ENCODE measurements at regions of chr22 and their contacts with region 1.

Region 1: DNA sequence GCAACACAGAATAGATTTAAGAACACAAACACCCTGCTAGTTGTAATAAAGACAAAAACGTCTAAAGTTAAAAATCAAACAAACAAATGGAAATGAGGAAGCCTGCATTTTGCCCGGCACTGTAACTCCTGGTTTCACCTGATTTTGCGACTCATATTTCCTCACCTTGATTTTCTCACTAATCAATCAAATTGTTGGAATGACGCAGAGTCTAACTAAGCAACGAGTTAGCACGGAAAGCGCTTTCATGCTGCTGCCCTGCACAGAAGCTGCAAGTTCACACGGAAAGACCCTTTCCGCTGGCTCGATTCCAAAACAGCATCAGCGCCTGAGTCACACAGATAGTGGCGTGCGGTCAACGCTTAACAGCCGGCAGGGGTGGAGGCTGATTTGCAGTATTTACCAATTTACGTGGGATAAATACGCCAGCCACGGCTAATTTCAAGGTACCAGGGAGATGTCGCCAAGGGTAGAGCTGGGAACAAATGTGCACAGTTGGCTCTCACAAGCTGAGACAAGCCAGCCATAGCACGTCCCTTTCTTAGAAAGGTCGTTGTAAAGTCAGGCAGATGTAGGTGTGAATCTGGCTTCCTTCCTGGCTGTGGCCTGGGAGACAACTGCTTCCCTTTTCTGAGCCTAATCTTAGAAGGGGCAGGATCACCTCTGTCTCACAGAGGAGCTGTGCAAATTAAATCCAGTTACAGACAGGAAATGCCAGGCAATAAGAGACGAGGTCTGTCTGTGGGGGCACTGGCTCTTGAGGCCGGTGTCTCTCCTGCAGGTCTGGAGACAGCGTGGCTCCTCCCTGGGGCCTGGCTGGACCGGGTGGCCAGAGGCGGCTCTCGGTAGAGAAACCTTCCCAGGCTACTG is 76.9 kb upstream of the TTLL12 start:
- DNase-seq: peak; percentile 60 to 95 (median 79)
- H3K4me3 ChIP-seq: peak overlapping the region; percentile 44
- H3K4me3 Mint-ChIP-seq: peak overlapping the region; percentile 65 to 88 (median 84)
- H3K27ac ChIP-seq: peak overlapping the region; percentile 68
- H3K27ac Mint-ChIP-seq: peak overlapping the region; percentile 86 to 98 (median 96)
- H3K4me1 ChIP-seq: peaks cover 26% of the 10 kb centered on the region
- H3K4me1 Mint-ChIP-seq: peaks cover 26 to 33% (median 32%) of the 10 kb centered on the region in 3 donors
- H3K27me3 ChIP-seq: no peaks in the 10 kb centered on the region
- H3K27me3 Mint-ChIP-seq: no peaks in the 10 kb centered on the region

Region 2: DNA sequence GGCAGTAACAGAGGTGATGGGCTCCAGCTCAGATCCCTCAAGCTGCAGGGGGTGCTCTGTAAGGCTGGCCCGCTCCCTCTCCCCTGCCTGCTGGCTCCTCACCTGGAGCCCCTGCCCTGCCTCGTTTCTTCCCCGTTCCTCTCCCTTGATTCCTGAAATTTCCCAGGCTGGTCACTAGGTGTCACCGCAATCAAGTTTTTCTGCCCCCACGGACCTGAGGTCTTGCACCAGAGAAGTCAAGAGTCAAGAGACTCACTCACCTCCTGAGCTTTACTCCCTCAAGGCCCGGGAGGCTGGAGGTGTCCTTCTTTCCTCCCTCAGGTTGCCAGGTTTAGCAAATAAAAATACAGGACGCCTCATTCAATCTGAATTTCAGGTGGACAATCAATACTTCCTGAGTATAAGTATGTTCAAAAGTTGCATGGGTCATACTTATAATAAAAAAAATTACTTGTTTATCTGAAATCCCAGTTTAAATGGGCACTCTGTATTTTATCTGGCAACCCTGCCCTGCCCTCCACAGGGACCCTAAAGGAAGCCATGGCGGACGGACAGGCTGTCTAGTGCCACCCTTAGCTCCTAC is 10.1 kb after region 1 on chr22:
- CTCF ChIA-PET with region 1: interaction called, 21 read pairs
- POLR2A ChIA-PET with region 1: no interaction called
- DNase-seq: peak in 4 of 5 donors; percentile 17 to 55 (median 33)
- H3K4me3 ChIP-seq: no peak overlapping the region
- H3K4me3 Mint-ChIP-seq: no peak overlapping the region
- H3K27ac ChIP-seq: no peak overlapping the region
- H3K27ac Mint-ChIP-seq: peak overlapping the region in 1 of 8 donors; percentile 20
- H3K4me1 ChIP-seq: no peaks in the 10 kb centered on the region
- H3K4me1 Mint-ChIP-seq: peaks cover 4 to 5% (median 4%) of the 10 kb centered on the region in 3 donors
- H3K27me3 ChIP-seq: no peaks in the 10 kb centered on the region
- H3K27me3 Mint-ChIP-seq: peaks cover 2 to 5% of the 10 kb centered on the region in 2 donors

Measured in CD8-positive, alpha-beta memory T cell (primary cell).